Gastrocnemius medialis (tissue), 4 donors: ENCODE measurements at regions of chr1 and their contacts with region 1.

Region 1: GRCh38 chr1:54273092-54273794 is 73.3 kb downstream of the MRPL37 start:
- DNase-seq: peak; percentile 84 to 91
- ATAC-seq: peak; percentile 82 to 84
- H3K4me3 ChIP-seq: peak overlapping the region; percentile 30 to 43 (median 36)
- H3K27ac ChIP-seq: peak overlapping the region; percentile 89 to 92 (median 92)
- H3K4me1 ChIP-seq: peaks cover 74 to 80% of the 10 kb centered on the region in 2 donors
- H3K27me3 ChIP-seq: no peaks in the 10 kb centered on the region
- CTCF ChIP-seq: peak; percentile 59 to 82 (median 67)
- POLR2A ChIP-seq: peak; percentile 21

Region 2: DNA sequence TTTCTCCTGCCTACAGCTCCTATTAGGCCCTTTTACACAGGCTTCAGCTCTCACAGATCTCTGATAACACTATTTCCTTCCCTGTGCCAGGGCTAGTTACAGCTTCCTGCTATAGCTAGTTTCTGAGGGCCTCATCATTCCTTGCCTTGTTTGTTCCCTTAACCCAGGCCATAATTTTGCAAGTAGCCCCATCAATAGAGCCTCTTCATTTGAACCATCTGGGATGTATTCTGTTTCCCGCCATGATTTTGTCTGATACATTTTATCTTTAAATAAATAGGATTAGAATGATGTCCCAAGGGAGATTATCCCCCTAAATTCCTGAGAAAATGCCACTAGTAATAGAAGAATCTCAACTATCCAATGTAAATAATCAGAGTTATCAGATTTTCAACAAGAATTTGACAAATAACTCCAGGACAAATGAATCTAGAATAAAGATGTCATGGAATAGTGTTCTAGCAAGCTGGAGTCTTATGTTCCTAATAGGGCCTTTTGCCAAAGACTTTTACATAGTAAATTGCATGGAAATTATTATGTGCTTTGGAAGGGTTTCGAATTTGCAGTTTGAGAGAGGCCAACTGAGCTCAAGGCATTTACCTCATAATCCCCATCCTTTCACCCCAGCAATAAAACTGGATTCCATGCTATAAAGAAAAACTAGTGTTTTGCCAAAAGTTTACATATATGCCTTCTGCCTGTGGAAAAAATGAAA is 343.8 kb before region 1 on chr1:
- in situ Hi-C with region 1: no loop called
- intact Hi-C with region 1: no loop called
- DNase-seq: no peak
- ATAC-seq: no peak
- H3K4me3 ChIP-seq: no peak overlapping the region
- H3K27ac ChIP-seq: no peak overlapping the region
- H3K4me1 ChIP-seq: no peaks in the 10 kb centered on the region
- H3K27me3 ChIP-seq: no peaks in the 10 kb centered on the region
- CTCF ChIP-seq: no peak
- POLR2A ChIP-seq: no peak

Region 3: DNA sequence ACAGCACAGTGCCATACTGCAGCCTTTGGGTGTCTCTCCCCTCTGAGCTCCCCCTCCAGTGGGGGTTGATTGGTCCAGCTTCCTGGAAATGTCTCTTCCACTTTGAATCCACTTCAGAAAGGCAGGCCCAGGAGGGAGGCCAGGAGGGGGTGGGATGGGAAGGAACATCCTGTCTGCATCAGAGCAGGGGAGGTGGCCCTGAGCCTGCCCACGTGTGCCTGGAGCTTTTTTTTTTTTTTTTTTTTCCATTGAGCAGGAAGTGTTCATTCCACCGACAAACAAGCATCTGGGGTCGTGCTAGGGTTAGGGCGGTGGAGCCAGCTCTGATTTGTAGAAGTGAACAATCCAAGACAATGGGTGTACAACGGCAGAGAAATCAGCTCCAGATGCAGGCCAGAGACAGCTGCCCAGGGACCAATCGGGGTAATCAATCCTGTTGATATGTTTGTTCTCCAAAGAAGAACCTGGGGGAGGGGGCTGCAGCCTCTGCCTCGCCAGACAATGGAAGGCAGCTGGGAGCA is 39.6 kb after region 1 on chr1:
- in situ Hi-C with region 1: no loop called
- intact Hi-C with region 1: no loop called
- DNase-seq: peak in 1 of 2 donors; percentile 33
- ATAC-seq: peak; percentile 24 to 35
- H3K4me3 ChIP-seq: no peak overlapping the region
- H3K27ac ChIP-seq: peak overlapping the region; percentile 56 to 76 (median 64)
- H3K4me1 ChIP-seq: peaks cover 43 to 54% of the 10 kb centered on the region in 2 donors
- H3K27me3 ChIP-seq: no peaks in the 10 kb centered on the region
- CTCF ChIP-seq: no peak
- POLR2A ChIP-seq: no peak

Region 4: GRCh38 chr1:54335755-54336108 is 62.5 kb after region 1 on chr1:
- in situ Hi-C with region 1: no loop called
- intact Hi-C with region 1: loop called (anchors 5 kb)
- DNase-seq: peak; percentile 68 to 77
- ATAC-seq: peak; percentile 55 to 66
- H3K4me3 ChIP-seq: peak overlapping the region; percentile 27 to 39 (median 32)
- H3K27ac ChIP-seq: peak overlapping the region; percentile 96 to 97 (median 96)
- H3K4me1 ChIP-seq: peaks cover 93% of the 10 kb centered on the region in 2 donors
- H3K27me3 ChIP-seq: no peaks in the 10 kb centered on the region
- CTCF ChIP-seq: no peak
- POLR2A ChIP-seq: no peak

Region 5: DNA sequence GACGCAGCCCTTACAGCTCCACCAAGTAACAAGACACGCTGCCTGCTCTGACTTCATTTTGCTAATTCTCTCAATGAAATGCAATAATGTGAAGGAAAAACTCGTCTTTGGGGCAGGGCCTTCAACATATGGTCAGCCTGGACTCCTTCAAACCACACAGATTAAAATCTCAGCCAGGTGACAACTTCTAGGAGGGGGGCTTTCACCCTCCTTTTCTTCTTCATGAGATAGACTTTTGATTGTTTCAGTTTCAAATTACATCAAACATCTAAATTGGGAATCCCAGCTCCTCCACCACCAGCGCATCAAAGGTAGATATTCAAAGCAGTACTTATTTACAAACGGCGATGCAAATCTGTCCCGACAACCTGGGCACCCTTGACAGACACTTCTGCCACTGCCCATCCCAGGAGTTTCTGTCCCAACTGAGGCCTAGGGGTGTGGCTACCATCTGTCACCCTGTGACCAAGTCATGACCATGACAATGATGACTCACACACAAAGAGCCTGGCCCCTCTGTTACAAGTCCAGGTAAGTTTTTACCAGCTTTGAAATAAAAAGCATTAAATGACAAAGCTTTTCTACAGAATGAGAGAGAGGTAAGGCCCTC is 103.3 kb after region 1 on chr1:
- in situ Hi-C with region 1: no loop called
- intact Hi-C with region 1: no loop called
- DNase-seq: no peak
- ATAC-seq: no peak
- H3K4me3 ChIP-seq: no peak overlapping the region
- H3K27ac ChIP-seq: peak overlapping the region; percentile 12 to 73 (median 61)
- H3K4me1 ChIP-seq: peaks cover 87 to 91% of the 10 kb centered on the region in 2 donors
- H3K27me3 ChIP-seq: no peaks in the 10 kb centered on the region
- CTCF ChIP-seq: no peak
- POLR2A ChIP-seq: no peak

Region 6: DNA sequence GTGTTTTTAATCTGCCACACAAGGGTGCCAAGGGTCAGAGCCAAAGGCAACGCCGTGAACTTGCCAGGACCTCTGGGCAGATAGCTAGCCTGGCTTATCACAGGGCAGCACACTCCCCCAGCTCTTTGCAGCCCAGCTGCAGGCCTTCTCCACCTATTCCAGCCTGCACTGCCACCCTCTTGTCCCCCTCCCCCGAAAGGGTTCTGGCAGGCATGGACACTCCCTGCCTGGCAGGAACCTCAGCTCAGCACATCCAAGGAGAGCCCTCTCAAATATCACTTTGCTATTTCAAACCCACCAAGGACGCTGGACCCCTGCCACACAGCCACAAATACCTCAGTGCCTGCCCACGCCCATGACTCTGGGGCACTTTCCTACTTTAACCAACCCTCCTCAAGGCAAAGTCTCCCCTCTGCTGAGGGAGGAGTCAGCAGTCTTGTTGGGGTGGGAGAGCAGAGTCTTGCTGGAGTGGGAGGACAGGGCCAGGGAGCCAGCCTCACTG is 123.9 kb after region 1 on chr1:
- in situ Hi-C with region 1: loop called in 1 of 4 experiments (anchors 10 kb)
- intact Hi-C with region 1: no loop called
- DNase-seq: peak; percentile 44 to 89
- ATAC-seq: peak; percentile 27 to 81
- H3K4me3 ChIP-seq: peak overlapping the region in 1 of 4 donors; percentile 6
- H3K27ac ChIP-seq: peak overlapping the region; percentile 79 to 89 (median 84)
- H3K4me1 ChIP-seq: peaks cover 88 to 92% of the 10 kb centered on the region in 2 donors
- H3K27me3 ChIP-seq: no peaks in the 10 kb centered on the region
- CTCF ChIP-seq: no peak
- POLR2A ChIP-seq: no peak

Region 7: GRCh38 chr1:54547601-54548388 is 274.6 kb after region 1 on chr1 and contains the start of gene ACOT11:
- in situ Hi-C with region 1: no loop called
- intact Hi-C with region 1: loop called (anchors 1 kb)
- DNase-seq: peak; percentile 87 to 96
- ATAC-seq: peak; percentile 74 to 83
- H3K4me3 ChIP-seq: peak within 1 kb of the TSS; percentile 27 to 51 (median 30)
- H3K27ac ChIP-seq: peak within 1 kb of the TSS; percentile 84 to 98 (median 92)
- H3K4me1 ChIP-seq: peaks cover 32 to 34% of the 10 kb centered on the region in 2 donors
- H3K27me3 ChIP-seq: no peaks in the 10 kb centered on the region
- CTCF ChIP-seq: peak; percentile 54 to 81 (median 73)
- POLR2A ChIP-seq: peak; percentile 80 to 81
- total RNA-seq, gene ACOT11: 0.90 to 3.2 (median 1.2) TPM

Region 8: DNA sequence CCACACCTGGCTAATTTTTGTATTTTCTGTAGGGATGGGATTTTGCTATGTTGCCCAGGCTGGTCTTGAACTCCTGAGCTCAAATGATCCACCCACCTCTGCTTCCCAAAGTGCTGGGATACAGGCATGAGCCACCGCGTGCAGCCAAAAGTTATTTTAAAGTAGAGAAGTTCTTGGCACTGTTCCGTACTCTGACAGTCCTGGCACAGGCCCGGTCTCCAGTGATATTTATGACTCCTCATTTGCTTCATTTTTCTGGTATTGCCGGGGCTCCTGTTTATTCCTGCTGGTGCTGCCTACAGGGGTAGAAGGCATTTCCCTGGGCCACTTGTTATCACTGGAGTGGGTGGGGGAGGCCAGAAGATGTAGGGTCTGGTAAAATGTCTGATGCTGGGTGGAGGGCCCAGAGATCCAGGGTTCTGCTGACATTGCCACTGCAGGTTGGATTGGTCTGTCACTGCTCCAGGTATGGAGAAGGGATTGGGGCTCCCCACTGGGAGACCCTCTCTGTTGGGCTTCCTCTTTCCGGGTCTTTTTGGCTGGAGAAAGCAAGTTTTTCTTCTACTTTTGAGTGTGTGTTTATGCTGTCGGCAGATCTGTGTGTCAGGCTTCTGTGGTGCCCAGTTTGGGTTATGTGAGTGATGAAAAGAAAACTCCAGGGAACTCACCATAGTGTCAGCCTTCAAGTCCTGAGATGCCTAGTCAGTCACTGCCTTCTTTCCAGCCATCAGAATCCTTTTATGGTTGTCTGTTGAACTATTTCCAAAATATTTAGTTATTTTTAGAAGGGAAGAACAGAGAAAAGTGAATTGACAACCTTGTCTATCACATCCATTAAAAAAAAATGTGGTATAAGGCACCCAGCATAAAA is 372.8 kb after region 1 on chr1:
- in situ Hi-C with region 1: no loop called
- intact Hi-C with region 1: no loop called
- DNase-seq: peak; percentile 34 to 62
- ATAC-seq: peak; percentile 88 to 93
- H3K4me3 ChIP-seq: no peak overlapping the region
- H3K27ac ChIP-seq: peak overlapping the region; percentile 37 to 75 (median 62)
- H3K4me1 ChIP-seq: peaks cover 9 to 11% of the 10 kb centered on the region in 2 donors
- H3K27me3 ChIP-seq: no peaks in the 10 kb centered on the region
- CTCF ChIP-seq: no peak
- POLR2A ChIP-seq: no peak